Natural killer cell (primary cell): ENCODE measurements at regions of chr4 and their contacts with region 1.

Region 1: DNA sequence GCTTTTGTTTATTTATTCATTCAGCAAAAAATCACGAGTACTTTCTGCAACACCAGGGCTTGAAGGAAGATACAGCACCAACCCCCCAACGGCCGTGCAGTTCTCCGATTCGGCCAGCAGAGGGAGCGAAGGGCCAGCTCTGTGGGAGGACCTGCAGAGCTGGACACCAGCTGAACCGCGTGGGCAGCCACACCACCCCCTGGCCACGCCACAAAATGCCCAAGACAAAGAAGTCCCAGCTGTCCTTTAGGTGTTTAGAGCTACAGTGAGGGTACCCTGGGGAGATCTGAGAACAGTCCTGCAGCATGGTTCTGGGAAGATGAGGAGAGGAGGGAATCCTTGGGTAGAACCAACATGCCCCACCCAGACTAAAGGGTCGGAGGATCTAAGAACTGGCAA is 83.1 kb downstream of the RELL1 start:
- DNase-seq: peak; percentile 69 to 80
- ATAC-seq: peak; percentile 83 to 94 (median 90)
- H3K4me3 ChIP-seq: no peak overlapping the region
- H3K4me3 Mint-ChIP-seq: no peak overlapping the region
- H3K27ac ChIP-seq: no peak overlapping the region
- H3K27ac Mint-ChIP-seq: no peak overlapping the region
- H3K4me1 ChIP-seq: peaks cover 4% of the 10 kb centered on the region
- H3K4me1 Mint-ChIP-seq: peaks cover 5 to 6% of the 10 kb centered on the region in 2 donors
- H3K27me3 ChIP-seq: no peaks in the 10 kb centered on the region
- H3K27me3 Mint-ChIP-seq: peaks cover 0 to 3% of the 10 kb centered on the region in 2 donors
- CTCF ChIP-seq: peak; percentile 98

Region 2: DNA sequence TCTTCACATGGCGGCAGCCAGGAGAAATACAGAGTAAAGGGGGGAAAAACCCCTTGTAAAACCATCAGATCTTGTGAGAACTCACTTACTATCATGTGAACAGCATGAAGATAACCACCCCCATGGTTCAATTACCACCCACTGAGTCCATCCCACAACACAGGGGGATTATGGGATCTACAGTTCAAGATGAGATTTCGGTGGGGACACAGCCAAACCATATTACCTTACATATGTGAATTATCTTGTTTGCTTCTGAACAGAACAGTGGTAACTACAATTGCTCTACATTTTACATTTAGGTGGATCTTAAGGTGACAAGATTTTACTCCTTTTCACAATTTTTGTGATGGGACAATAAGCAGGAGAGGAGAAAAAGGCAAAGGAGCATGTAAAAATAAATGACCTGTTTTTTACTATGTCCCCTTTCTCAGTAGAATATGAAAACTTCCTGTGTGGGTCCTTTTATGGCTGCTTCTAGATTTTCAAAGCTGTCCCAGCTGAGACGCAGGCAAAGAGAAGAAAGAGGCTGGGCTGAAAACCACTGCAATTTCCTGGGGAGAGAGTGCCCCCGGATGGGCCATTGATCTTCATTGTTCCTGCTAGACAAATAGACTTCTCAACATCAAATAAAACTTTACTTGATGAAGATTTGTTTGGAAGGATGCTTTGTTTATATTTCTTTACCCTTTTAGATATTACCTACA is 177.5 kb after region 1 on chr4:
- intact Hi-C with region 1: loop called (anchors 1 kb)
- DNase-seq: peak in 1 of 2 donors; percentile 83
- ATAC-seq: peak in 2 of 3 donors; percentile 46 to 78
- H3K4me3 ChIP-seq: no peak overlapping the region
- H3K4me3 Mint-ChIP-seq: no peak overlapping the region
- H3K27ac ChIP-seq: no peak overlapping the region
- H3K27ac Mint-ChIP-seq: peak overlapping the region; percentile 70 to 75
- H3K4me1 ChIP-seq: peaks cover 3% of the 10 kb centered on the region
- H3K4me1 Mint-ChIP-seq: peaks cover 14% of the 10 kb centered on the region in 2 donors
- H3K27me3 ChIP-seq: no peaks in the 10 kb centered on the region
- H3K27me3 Mint-ChIP-seq: no peaks in the 10 kb centered on the region
- CTCF ChIP-seq: no peak

Region 3: GRCh38 chr4:38034986-38035882 is 432.2 kb after region 1 on chr4:
- intact Hi-C with region 1: loop called (anchors 1 kb)
- DNase-seq: peak in 1 of 2 donors; percentile 79
- ATAC-seq: peak; percentile 57 to 80 (median 69)
- H3K4me3 ChIP-seq: no peak overlapping the region
- H3K4me3 Mint-ChIP-seq: no peak overlapping the region
- H3K27ac ChIP-seq: no peak overlapping the region
- H3K27ac Mint-ChIP-seq: no peak overlapping the region
- H3K4me1 ChIP-seq: no peaks in the 10 kb centered on the region
- H3K4me1 Mint-ChIP-seq: peaks cover 0 to 6% of the 10 kb centered on the region in 2 donors
- H3K27me3 ChIP-seq: no peaks in the 10 kb centered on the region
- H3K27me3 Mint-ChIP-seq: no peaks in the 10 kb centered on the region
- CTCF ChIP-seq: peak; percentile 88